ENCODE measurements at regions of chr2 and their contacts with region 1.

Region 1: GRCh38 chr2:127387655-127388422 is at the start of gene MAP3K2:
- DNase-seq: peak; percentile 95
- ATAC-seq: peak; percentile 73
- H3K4me3 Mint-ChIP-seq: peak within 1 kb of the TSS; percentile 87
- H3K27ac Mint-ChIP-seq: peak within 1 kb of the TSS; percentile 100
- H3K4me1 Mint-ChIP-seq: peaks cover 75% of the 10 kb centered on the region
- H3K27me3 Mint-ChIP-seq: no peaks in the 10 kb centered on the region
- CTCF ChIP-seq: no peak
- total RNA-seq, gene MAP3K2: 63.1 and 77.7 TPM in 2 replicates

Region 2: GRCh38 chr2:127086990-127087790 is 300.6 kb before region 1 on chr2:
- CTCF ChIA-PET with region 1: no interaction called
- POLR2A ChIA-PET with region 1: no interaction called
- intact Hi-C with region 1: loop called (anchors 10 kb)
- DNase-seq: peak; percentile 48
- ATAC-seq: peak; percentile 25
- H3K4me3 Mint-ChIP-seq: peak overlapping the region; percentile 82
- H3K27ac Mint-ChIP-seq: peak overlapping the region; percentile 91
- H3K4me1 Mint-ChIP-seq: peaks cover 67% of the 10 kb centered on the region
- H3K27me3 Mint-ChIP-seq: no peaks in the 10 kb centered on the region
- CTCF ChIP-seq: no peak

Region 3: DNA sequence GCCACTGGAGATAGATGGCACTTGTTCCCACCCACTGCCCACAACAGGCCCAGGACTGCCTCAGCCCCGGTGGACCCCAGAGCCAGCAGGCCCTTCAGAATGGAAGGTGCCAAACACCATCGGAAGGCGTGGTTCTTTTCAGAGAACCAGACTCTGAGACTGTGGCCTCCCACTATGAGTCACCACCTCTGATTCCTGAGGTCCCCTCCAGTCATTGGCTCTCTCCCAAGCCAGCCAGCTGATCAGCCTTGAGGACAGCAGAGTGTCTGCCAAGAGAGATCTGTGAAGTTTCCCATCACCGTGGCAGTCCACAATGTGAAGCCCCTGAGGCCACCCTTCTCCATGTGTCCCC is 10.4 kb after region 1 on chr2:
- CTCF ChIA-PET with region 1: no interaction called
- POLR2A ChIA-PET with region 1: interaction called, 10 read pairs
- intact Hi-C with region 1: no loop called
- DNase-seq: no peak
- ATAC-seq: no peak
- H3K4me3 Mint-ChIP-seq: no peak overlapping the region
- H3K27ac Mint-ChIP-seq: no peak overlapping the region
- H3K4me1 Mint-ChIP-seq: peaks cover 10% of the 10 kb centered on the region
- H3K27me3 Mint-ChIP-seq: no peaks in the 10 kb centered on the region
- CTCF ChIP-seq: no peak

Region 4: DNA sequence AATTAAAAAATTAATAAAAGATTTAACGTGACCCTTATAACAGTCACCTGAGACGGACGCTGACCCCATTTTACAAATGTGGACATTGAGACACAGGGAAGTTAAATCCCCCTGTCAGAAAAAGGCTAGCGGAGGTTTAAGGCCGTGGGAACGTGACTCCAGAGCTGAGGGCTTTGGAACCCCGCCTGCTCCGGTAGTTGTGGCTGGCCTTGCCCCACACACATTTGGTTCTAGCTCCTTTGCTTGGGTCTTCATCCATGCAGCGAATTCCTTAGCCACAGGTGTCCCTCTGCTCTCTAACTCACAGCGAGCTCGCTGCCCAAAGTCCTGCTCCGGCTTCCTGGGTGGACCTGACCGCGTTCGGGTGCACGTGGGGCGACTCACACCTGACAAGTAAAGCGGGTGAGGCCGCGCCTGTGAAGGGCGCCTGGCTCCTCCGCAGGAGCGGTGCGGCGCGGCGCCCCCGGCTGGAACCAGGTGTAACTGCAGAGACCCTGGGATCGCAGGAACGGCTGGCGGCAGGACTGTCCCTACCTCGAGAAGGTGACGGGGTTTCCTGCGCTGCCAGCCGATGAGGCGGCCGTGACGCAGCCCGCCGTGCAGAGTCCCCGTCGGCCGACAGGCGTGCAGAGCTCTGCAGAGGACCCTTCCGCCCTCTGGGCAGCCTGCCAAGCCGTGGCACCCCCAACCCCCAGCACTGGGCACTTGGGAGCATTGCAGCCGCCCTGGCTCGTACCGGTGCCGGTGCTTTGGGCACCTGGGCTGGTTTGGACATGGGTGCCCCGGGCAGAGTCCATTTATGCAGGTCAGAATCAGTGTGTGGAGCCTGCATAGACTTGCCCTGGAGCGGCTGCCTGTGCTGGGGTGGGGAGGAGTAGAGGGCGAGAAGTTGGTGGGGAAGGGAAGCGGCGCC is 28.0 kb after region 1 on chr2:
- CTCF ChIA-PET with region 1: interaction called, 4 read pairs
- POLR2A ChIA-PET with region 1: interaction called, 23 read pairs
- intact Hi-C with region 1: loop called (anchors 1 kb)
- DNase-seq: peak; percentile 72
- ATAC-seq: peak; percentile 93
- H3K4me3 Mint-ChIP-seq: peak overlapping the region; percentile 80
- H3K27ac Mint-ChIP-seq: no peak overlapping the region
- H3K4me1 Mint-ChIP-seq: peaks cover 49% of the 10 kb centered on the region
- H3K27me3 Mint-ChIP-seq: no peaks in the 10 kb centered on the region
- CTCF ChIP-seq: no peak

Region 5: DNA sequence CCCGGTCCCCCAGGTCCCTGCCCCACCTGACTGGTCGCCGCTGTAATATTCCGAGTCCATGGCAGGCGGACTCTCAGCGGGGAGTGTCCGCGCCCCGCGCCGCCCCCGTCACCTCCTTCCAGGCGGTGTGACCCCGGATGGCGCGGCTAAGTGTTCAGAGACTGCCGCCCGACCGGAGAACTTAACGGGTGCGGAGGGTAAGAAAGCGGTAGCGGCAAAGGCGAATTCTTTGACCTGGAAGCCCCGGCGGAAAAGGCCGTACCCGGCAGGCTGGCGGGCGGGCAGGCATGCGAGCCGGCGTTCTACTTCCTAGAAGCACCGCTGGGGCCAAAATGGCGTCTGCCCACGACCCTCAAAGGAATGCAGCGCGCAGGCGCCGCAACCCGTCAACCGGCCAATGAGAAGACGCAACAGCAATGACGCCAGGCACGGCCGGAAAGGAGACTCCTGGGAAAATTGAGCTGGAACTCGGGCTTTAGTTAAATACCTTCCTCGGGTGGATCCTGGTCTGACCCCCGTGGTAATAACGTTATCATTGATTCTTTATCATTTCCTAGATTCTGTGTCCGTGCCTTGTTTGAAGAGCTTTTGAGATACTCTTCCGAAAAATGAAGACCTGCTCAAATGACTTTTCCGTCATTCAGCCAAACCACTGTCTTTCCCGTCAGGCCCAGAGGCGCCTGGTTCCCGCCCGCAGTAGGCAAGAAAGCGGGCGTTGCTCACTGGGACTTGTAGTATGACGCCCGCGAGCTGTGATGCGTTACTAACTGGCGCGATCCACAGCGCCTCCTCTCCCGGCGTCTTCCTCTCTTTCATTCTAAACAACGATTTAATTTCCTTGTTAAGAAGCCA is 138.5 kb after region 1 on chr2 and contains the start of gene IWS1:
- CTCF ChIA-PET with region 1: no interaction called
- POLR2A ChIA-PET with region 1: interaction called, 6 read pairs
- intact Hi-C with region 1: loop called (anchors 1 kb)
- DNase-seq: peak; percentile 85
- ATAC-seq: peak; percentile 86
- H3K4me3 Mint-ChIP-seq: peak within 1 kb of the TSS; percentile 95
- H3K27ac Mint-ChIP-seq: peak within 1 kb of the TSS; percentile 98
- H3K4me1 Mint-ChIP-seq: peaks cover 32% of the 10 kb centered on the region
- H3K27me3 Mint-ChIP-seq: no peaks in the 10 kb centered on the region
- CTCF ChIP-seq: no peak
- total RNA-seq, gene IWS1: 45.6 and 49.3 TPM in 2 replicates

Region 6: DNA sequence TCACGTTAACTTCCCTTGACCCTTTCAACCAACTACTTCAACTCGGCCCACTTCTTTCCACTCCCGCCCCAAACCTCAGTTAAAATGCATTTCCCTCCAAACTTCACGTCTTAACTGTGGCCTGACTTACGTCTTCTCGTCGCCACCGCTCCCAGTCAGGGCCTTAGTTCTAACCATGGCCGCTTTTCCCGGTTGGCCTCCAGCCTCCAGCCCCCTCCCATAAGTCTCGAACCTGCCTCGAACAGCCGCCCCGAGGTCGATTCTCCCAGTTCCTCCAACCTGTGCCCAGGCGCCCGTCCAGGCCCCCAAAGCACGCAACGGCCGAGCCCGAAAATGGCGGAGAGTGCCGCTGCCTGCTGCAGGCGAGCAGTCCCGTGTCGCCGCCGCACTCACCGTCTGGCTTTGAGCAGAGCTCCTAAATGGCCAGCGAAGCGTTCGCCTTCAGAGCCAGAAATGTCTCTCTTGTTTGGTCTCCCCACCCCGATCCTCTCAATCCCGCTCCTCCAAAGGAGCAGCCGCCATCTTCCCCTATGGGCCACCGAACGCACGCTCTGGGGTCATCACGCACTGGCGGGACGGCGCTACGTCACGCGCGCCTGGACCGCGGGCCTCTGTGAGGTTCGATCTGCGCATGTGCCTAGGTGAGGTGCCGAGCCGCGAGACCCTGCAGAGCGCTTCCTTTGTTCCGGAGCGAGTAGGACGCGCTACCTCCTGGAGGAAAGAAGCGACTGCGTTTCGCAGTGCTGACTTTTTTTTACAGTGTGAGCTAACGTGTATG is 423.0 kb after region 1 on chr2 and contains the start of gene WDR33:
- CTCF ChIA-PET with region 1: no interaction called
- POLR2A ChIA-PET with region 1: no interaction called
- intact Hi-C with region 1: loop called (anchors 2 kb)
- DNase-seq: peak; percentile 88
- ATAC-seq: peak; percentile 96
- H3K4me3 Mint-ChIP-seq: peak within 1 kb of the TSS; percentile 89
- H3K27ac Mint-ChIP-seq: peak within 1 kb of the TSS; percentile 99
- H3K4me1 Mint-ChIP-seq: peaks cover 56% of the 10 kb centered on the region
- H3K27me3 Mint-ChIP-seq: no peaks in the 10 kb centered on the region
- CTCF ChIP-seq: no peak
- total RNA-seq, gene WDR33: 83.0 and 93.0 TPM in 2 replicates